Dorsolateral prefrontal cortex (tissue), 120 donors: ENCODE measurements at regions of chr1 and their contacts with region 1.

Region 1: GRCh38 chr1:160342953-160343869 is at the starts of genes COPA and NCSTN:
- DNase-seq: peak; percentile 82 to 94 (median 92)
- H3K4me3 ChIP-seq: peak within 1 kb of the TSS; percentile 50 to 100 (median 93)
- H3K27ac ChIP-seq: peak within 1 kb of the TSS; percentile 66 to 98 (median 92)
- H3K27me3 ChIP-seq: no peaks in the 10 kb centered on the region
- CTCF ChIP-seq: peak in 37 of 56 donors; percentile 11 to 58 (median 33)
- total RNA-seq, gene COPA: 107 to 252 (median 197) TPM
- total RNA-seq, gene NCSTN: 44.1 to 95.7 (median 60.5) TPM

Region 2: GRCh38 chr1:160193091-160193819 is 150.0 kb before region 1 on chr1:
- intact Hi-C with region 1: no loop called
- DNase-seq: peak; percentile 71 to 93 (median 84)
- H3K4me3 ChIP-seq: peak overlapping the region in 57 of 59 donors; percentile 5 to 59 (median 42)
- H3K27ac ChIP-seq: peak overlapping the region in 45 of 59 donors; percentile 10 to 86 (median 65)
- H3K27me3 ChIP-seq: no peaks in the 10 kb centered on the region
- CTCF ChIP-seq: peak; percentile 93 to 99 (median 97)

Region 3: DNA sequence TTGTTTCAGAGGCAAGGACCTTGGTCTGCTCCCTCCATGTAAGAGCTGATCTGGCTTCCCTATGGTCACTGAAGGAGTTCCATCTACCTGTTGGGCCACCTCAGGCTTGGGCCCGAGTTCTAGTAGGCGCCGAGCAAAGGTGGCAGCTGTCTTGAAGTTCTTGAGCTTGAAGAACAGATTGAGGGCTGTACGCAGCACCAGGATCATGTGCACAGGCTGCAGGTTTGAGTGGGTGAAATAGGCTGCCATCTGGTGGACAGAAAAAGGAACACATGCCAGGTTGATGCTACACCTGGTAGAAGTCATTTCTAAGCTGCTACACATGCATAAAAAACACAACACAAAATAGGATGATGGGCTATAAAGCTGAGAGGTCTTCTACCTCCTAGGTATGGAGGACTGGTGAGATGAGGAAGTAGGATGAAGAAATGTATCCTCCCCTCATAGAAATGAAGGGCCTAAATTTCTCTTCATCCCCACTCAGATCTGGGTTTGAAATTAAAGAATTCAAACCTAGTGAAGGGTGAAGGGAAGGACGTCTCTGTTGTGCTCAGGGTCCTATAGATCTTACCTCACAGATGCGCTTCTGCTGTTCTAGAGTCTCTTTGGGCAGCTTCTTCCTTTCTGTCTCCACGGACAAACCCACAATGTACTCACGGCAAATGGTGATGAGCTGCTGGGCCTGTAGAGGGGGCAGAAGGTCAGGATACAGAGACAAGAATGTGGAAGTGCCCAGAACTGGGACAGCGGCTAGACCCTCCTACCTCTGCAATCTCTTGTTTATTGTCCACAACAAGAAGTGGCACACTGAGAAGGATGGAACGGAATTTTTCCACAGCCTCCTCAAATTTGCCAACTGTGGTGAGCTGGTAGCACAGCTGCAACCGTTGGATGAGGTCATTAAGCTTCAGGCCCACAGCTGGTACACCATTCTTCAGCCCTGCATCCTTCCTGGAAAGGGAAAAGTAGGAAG is 51.7 kb before region 1 on chr1:
- intact Hi-C with region 1: loop called (anchors 5 kb)
- DNase-seq: peak in 9 of 10 donors; percentile 62 to 79 (median 72)
- H3K4me3 ChIP-seq: peak overlapping the region in 2 of 59 donors; percentile 1 to 10
- H3K27ac ChIP-seq: peak overlapping the region; percentile 30 to 93 (median 81)
- H3K27me3 ChIP-seq: no peaks in the 10 kb centered on the region
- CTCF ChIP-seq: peak; percentile 61 to 92 (median 84)

Region 4: DNA sequence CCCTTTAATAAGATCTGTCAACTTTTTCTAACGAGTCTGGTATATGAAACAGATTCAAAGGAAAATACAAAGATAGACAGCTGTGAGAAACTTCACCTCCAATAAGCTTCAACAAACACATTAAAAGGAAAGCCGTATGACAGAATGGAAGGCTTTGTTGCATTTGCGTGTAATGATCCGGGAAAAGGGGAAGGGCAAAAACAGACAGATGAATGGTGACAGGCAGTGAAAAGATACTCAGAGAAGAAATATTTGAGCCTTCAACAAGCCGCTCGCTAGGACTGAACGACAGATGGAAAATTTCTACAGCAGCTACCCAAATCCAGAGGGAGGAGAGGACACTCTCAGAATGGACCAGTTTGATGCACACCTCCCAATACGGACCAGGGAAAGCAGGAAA is 15.0 kb before region 1 on chr1:
- intact Hi-C with region 1: no loop called
- DNase-seq: peak in 1 of 10 donors; percentile 14
- H3K4me3 ChIP-seq: peak overlapping the region in 33 of 59 donors; percentile 0 to 54 (median 22)
- H3K27ac ChIP-seq: peak overlapping the region; percentile 50 to 100 (median 95)
- H3K27me3 ChIP-seq: no peaks in the 10 kb centered on the region
- CTCF ChIP-seq: peak in 2 of 56 donors; percentile 17 to 21